Caco-2 (cell line): ENCODE measurements at regions of chr6 and their contacts with region 1.

Region 1: DNA sequence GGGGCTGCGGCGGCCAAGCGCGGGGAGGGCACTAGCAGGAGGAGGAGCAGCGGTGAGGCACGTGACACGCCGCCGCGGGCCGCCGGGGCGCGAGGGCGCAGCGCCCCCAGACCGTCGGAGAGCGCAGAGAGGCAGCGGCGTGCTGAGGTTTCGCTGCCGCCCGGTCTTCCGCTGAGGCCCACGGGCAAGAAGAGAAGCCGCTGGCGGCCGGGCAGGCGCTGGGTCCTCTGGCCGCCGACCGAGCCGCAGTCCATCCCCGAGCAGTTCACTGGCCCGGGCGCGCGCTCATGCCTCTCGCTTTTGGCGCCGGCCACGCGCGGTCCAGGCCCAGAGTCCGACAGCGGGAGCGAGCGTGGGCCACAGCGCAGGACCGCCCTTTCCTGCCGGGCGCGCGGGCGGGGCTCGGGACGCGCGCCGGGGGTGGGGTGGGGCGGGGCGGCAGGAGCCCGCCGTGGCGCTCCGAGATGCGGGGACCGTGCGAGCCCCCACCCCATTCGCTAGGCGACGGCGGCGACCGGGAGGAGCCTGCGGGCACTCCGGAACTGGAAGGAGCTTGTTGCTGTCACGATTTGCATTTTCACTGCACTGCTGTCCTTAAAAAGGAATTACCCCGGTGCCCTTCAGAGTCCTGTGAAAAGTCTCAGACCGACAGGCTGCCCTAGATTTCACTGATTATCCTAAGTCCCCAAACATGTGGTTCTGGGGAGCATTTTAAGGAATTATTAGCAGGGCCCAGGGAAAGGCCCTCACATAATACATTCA is at the start of gene MCUR1:
- DNase-seq: peak; percentile 88 to 90
- H3K4me3 ChIP-seq: peak within 1 kb of the TSS; percentile 91
- H3K4me3 Mint-ChIP-seq: peak within 1 kb of the TSS; percentile 94
- H3K27ac Mint-ChIP-seq: peak within 1 kb of the TSS; percentile 83
- H3K4me1 ChIP-seq: peaks cover 36% of the 10 kb centered on the region
- H3K4me1 Mint-ChIP-seq: peaks cover 26% of the 10 kb centered on the region
- H3K27me3 ChIP-seq: no peaks in the 10 kb centered on the region
- H3K27me3 Mint-ChIP-seq: no peaks in the 10 kb centered on the region
- CTCF ChIP-seq: no peak
- total RNA-seq, gene MCUR1: 61.2 and 64.8 TPM in 2 replicates

Region 2: GRCh38 chr6:13769664-13770063 is 44.7 kb before region 1 on chr6:
- CTCF ChIA-PET with region 1: no interaction called
- POLR2A ChIA-PET with region 1: no interaction called
- intact Hi-C with region 1: no loop called
- DNase-seq: no peak
- H3K4me3 ChIP-seq: no peak overlapping the region
- H3K4me3 Mint-ChIP-seq: no peak overlapping the region
- H3K27ac Mint-ChIP-seq: no peak overlapping the region
- H3K4me1 ChIP-seq: no peaks in the 10 kb centered on the region
- H3K4me1 Mint-ChIP-seq: no peaks in the 10 kb centered on the region
- H3K27me3 ChIP-seq: no peaks in the 10 kb centered on the region
- H3K27me3 Mint-ChIP-seq: no peaks in the 10 kb centered on the region
- CTCF ChIP-seq: peak in 1 of 2 experiments; percentile 18

Region 3: DNA sequence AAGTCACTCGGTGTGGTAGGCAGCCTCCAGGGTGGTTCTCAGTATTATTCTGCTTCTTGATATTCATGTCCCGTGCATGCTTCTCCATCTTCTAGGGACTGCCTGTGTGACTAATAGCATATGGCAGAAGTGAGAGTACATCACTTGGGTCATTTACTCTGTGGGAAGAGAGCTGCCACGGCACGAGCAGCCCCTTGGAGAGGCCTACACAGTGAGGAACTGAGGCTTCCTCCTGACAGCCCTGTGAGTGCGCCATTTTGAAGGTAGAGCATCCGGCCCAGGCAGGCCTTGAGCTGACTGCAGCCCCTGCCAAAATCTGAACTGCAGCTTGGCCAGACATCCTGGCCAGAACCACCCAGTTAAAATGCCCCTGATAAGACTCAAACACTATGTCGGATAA is 17.3 kb after region 1 on chr6:
- CTCF ChIA-PET with region 1: no interaction called
- POLR2A ChIA-PET with region 1: no interaction called
- intact Hi-C with region 1: loop called (anchors 1 kb)
- DNase-seq: no peak
- H3K4me3 ChIP-seq: no peak overlapping the region
- H3K4me3 Mint-ChIP-seq: no peak overlapping the region
- H3K27ac Mint-ChIP-seq: no peak overlapping the region
- H3K4me1 ChIP-seq: peaks cover 36% of the 10 kb centered on the region
- H3K4me1 Mint-ChIP-seq: peaks cover 26% of the 10 kb centered on the region
- H3K27me3 ChIP-seq: no peaks in the 10 kb centered on the region
- H3K27me3 Mint-ChIP-seq: no peaks in the 10 kb centered on the region
- CTCF ChIP-seq: no peak

Region 4: DNA sequence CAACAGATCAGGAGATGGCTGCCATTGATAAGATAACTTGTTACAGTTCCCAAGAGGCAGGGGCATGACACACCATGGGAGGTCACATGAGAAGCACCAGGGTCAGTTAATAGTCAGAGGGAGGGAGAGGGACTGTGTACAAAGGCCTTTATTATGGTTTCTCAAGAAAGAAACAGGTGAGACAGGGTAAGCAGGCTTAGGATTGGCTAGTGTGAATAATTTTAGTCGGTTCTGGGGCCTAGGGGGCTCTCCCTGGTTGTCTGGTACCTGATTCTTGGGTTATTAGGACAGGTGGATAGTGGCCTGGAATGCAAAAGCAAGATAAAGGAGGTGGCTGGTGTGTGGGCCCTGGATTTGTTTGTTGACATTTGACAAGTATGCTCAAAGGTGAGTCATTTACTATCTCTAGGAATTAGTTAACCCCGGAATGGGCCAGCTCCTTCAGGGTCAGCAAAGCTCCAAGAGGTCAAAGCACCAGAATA is 49.4 kb after region 1 on chr6:
- CTCF ChIA-PET with region 1: no interaction called
- POLR2A ChIA-PET with region 1: interaction called, 4 read pairs
- intact Hi-C with region 1: loop called (anchors 1 kb)
- DNase-seq: peak; percentile 95 to 96
- H3K4me3 ChIP-seq: no peak overlapping the region
- H3K4me3 Mint-ChIP-seq: peak overlapping the region; percentile 8
- H3K27ac Mint-ChIP-seq: peak overlapping the region; percentile 29
- H3K4me1 ChIP-seq: peaks cover 30% of the 10 kb centered on the region
- H3K4me1 Mint-ChIP-seq: peaks cover 16% of the 10 kb centered on the region
- H3K27me3 ChIP-seq: no peaks in the 10 kb centered on the region
- H3K27me3 Mint-ChIP-seq: no peaks in the 10 kb centered on the region
- CTCF ChIP-seq: no peak

Region 5: DNA sequence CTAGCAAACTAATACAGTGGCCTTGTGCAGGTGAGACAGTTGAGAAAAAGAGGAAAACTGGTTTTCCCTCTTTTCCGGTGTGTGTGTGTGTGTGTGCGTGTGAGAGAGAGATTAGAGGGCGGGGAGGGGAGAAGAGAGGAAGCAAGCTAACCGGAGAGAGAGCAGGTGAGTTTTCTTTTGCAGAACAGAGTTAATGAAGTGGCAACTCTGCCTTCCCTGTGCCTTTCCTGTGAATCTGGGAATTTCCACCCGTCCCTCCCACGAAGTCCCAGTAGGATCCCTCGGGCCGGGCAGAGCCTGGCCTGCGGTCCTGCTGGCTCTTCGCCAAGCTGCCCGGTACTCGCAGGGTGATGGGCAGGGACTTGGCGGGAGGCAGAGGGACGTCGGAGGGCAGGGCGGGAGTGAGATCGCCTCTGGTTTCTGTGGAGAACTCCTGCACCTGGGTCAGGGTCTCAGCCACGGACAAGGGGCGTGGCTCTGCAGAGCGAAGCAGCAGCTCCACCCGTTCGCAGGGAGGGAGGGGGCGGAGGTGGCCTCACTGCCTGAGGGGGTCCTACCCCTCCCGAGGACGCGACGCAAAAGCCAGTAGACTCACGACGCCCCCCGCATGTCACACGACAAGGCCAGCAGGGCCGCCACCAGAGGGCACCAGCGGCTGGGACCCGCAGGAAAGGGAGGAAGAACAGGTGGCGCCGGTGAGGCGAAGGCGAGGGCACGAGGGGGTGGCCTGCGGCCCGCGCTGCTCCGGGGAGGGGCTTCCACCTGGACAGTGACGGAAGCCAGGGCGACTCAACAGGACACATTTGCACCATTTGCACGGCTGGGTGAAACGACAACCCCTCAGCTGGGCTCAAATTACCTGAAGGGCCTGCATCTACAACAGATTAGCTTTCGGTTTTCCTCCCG is 59.2 kb after region 1 on chr6:
- CTCF ChIA-PET with region 1: interaction called, 9 read pairs
- POLR2A ChIA-PET with region 1: interaction called, 6 read pairs
- intact Hi-C with region 1: loop called (anchors 2 kb)
- DNase-seq: peak; percentile 94 to 96
- H3K4me3 ChIP-seq: peak overlapping the region; percentile 53
- H3K4me3 Mint-ChIP-seq: peak overlapping the region; percentile 75
- H3K27ac Mint-ChIP-seq: peak overlapping the region; percentile 99
- H3K4me1 ChIP-seq: peaks cover 17% of the 10 kb centered on the region
- H3K4me1 Mint-ChIP-seq: peaks cover 14% of the 10 kb centered on the region
- H3K27me3 ChIP-seq: no peaks in the 10 kb centered on the region
- H3K27me3 Mint-ChIP-seq: no peaks in the 10 kb centered on the region
- CTCF ChIP-seq: peak; percentile 84 to 98